Activated T-helper 2 cell treated with anti-CD3 and anti-CD28 coated beads, Interferon-gamma antibody, Interleukin-2, Interleukin-4, amounts not matched to agents 10 μg/mL and 5 μg/mL and 100 μg/mL, durations not matched to agents 14 hours and 24 hours and 36 hours (primary cell): ENCODE measurements at regions of chrX and their contacts with region 1.

Region 1: GRCh38 chrX:150683536-150684146 is 9.6 kb upstream of the MTMR1 start:
- DNase-seq: no peak
- H3K4me3 Mint-ChIP-seq: no peak overlapping the region
- H3K27ac Mint-ChIP-seq: no peak overlapping the region
- H3K4me1 Mint-ChIP-seq: peaks cover 5% of the 10 kb centered on the region
- H3K27me3 Mint-ChIP-seq: no peaks in the 10 kb centered on the region

Region 2: GRCh38 chrX:149962859-149963757 is 720.5 kb before region 1 on chrX:
- intact Hi-C with region 1: loop called (anchors 5 kb)
- DNase-seq: no peak
- H3K4me3 Mint-ChIP-seq: no peak overlapping the region
- H3K27ac Mint-ChIP-seq: no peak overlapping the region
- H3K4me1 Mint-ChIP-seq: peaks cover 5% of the 10 kb centered on the region
- H3K27me3 Mint-ChIP-seq: no peaks in the 10 kb centered on the region

Region 3: DNA sequence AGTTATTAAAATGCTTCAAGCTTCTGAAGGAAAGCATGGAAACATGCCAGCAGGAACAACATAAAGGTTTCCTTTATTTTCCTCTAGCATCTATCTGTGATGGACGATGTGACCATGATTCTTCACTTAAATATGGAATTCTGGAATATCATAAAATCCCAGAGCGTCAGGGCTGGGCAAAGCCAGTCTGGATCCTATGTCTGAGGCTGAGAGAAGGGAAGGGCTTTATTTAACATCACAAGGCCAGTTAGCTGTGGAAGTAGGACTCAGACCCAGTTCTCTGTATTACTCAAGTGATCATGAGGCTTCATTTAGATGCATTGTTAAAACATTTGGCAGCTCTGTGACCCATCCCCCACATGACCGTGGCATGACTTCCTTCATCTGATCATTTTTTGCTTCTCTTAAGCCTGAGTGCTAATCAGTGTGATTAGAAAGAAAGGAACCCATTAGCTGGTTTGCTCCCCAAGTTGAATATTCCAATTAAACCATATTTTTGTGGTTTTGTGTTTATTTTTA is 704.5 kb before region 1 on chrX:
- intact Hi-C with region 1: no loop called
- DNase-seq: no peak
- H3K4me3 Mint-ChIP-seq: no peak overlapping the region
- H3K27ac Mint-ChIP-seq: no peak overlapping the region
- H3K4me1 Mint-ChIP-seq: no peaks in the 10 kb centered on the region
- H3K27me3 Mint-ChIP-seq: no peaks in the 10 kb centered on the region

Region 4: DNA sequence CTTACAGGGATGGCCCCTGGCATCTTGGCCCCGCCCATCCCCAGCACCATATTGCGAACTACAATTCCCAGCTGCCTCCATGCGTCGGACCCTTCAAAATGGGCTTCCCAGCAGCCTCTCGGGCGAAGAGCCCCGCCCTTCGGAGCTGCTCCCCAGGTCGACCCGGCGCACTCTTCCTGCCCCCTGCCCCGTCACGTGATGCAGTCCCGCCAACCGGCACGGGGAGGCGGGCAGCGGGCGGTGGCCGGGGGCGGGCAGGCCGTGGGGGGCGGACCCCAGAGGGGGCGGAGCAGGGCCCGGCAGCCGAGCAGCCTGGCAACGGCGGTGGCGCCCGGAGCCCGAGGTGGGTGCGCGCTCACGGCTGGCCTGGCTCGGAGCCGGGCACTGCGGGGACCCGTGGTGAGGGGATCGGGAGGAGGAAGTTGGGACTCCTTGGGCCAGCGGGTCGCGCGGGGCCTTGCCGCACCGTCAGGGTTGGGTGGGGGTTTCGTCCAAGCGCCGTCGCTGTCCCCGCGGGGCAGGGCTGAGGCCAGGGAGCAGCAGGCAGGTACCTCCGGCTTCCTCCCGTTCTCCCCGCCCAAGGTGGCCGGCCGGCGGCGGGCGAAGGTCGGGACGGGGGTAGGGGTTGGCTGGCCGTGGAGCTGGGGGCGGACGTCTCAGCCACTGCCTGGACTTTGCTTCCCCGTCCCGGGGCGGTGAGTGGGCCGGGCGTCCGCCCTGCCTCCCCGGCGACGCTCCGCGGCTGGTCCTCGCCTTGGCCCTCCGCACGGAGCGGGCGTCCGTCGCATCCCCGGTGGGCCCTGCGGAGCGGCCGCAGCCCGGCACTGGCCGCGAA is 115.1 kb before region 1 on chrX and contains the start of gene MTM1:
- intact Hi-C with region 1: no loop called
- DNase-seq: peak; percentile 89
- H3K4me3 Mint-ChIP-seq: peak within 1 kb of the TSS; percentile 82
- H3K27ac Mint-ChIP-seq: peak within 1 kb of the TSS; percentile 94
- H3K4me1 Mint-ChIP-seq: peaks cover 35% of the 10 kb centered on the region
- H3K27me3 Mint-ChIP-seq: no peaks in the 10 kb centered on the region
- total RNA-seq, gene MTM1: 25.2 and 26.5 TPM in 2 replicates

Region 5: GRCh38 chrX:150635952-150636351 is 47.7 kb before region 1 on chrX:
- intact Hi-C with region 1: no loop called
- DNase-seq: no peak
- H3K4me3 Mint-ChIP-seq: no peak overlapping the region
- H3K27ac Mint-ChIP-seq: peak overlapping the region; percentile 74
- H3K4me1 Mint-ChIP-seq: peaks cover 8% of the 10 kb centered on the region
- H3K27me3 Mint-ChIP-seq: no peaks in the 10 kb centered on the region

Region 6: DNA sequence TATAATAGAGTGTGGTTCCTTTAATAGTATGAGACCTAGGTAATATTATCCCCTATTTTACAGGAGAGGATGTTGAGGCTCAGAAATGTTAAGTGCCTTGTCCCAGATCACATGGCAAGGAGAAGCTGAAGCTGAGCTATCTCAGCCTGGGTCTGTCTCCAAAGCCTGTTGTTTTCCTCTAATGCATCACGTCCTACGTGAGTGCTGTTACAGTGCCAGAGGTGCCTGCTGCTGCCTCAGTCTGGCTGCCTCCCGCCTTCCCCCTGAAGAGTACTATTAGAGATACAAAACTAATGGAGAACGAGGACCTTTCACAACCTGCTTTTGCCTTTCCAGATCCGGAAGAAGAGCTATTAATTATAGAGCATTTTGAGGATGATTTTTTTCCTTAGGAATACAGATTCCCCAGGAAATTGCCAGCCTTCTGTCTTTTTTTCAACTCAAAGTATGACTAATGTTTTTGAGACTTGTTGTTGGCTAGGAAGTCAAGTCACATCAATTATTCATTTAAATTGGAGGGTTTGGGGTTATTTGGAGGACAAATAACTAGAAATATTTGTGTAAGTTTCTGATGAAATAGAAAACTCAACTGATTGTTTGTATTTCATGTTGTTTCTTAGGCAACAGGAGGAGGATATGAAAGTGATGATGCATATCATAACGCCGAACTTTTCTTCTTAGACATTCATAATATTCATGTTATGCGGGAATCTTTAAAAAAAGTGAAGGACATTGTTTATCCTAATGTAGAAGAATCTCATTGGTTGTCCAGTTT is 34.4 kb before region 1 on chrX:
- intact Hi-C with region 1: no loop called
- DNase-seq: no peak
- H3K4me3 Mint-ChIP-seq: no peak overlapping the region
- H3K27ac Mint-ChIP-seq: peak overlapping the region; percentile 44
- H3K4me1 Mint-ChIP-seq: peaks cover 4% of the 10 kb centered on the region
- H3K27me3 Mint-ChIP-seq: no peaks in the 10 kb centered on the region

Region 7: DNA sequence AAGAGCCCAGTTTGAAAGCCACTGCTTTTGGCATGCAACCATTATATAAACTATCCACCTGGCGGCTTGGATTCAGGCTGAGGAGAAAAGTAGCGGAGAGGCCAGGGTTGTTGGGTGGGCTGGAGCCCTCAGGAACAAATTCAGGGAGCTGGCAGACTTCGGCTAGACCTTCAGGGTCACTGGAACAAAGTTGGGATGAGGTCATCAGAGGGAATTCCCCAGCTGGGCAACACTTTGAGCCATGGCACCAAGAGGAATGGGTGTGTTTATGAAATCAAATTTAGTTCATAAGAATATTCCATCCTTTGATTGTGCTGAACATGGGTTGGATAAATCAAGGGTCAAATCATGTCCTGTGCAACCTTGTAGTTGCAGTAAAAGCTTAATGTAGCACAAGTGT is 31.5 kb after region 1 on chrX:
- intact Hi-C with region 1: loop called (anchors 1 kb)
- DNase-seq: no peak
- H3K4me3 Mint-ChIP-seq: no peak overlapping the region
- H3K27ac Mint-ChIP-seq: no peak overlapping the region
- H3K4me1 Mint-ChIP-seq: peaks cover 12% of the 10 kb centered on the region
- H3K27me3 Mint-ChIP-seq: no peaks in the 10 kb centered on the region